ENCODE measurements at regions of chr15 and their contacts with region 1.

Region 1: GRCh38 chr15:46502668-46503067 is 867.8 kb downstream of the SQOR start:
- DNase-seq: no peak
- ATAC-seq: no peak
- H3K4me3 ChIP-seq: no peak overlapping the region
- H3K4me3 Mint-ChIP-seq: no peak overlapping the region
- H3K27ac ChIP-seq: no peak overlapping the region
- H3K27ac Mint-ChIP-seq: no peak overlapping the region
- H3K4me1 ChIP-seq: no peaks in the 10 kb centered on the region
- H3K4me1 Mint-ChIP-seq: no peaks in the 10 kb centered on the region
- H3K27me3 ChIP-seq: peaks cover 0 to 3% of the 10 kb centered on the region in 2 experiments
- H3K27me3 Mint-ChIP-seq: no peaks in the 10 kb centered on the region

Region 2: GRCh38 chr15:46471096-46471495 is 31.6 kb before region 1 on chr15:
- CTCF ChIA-PET with region 1: no interaction called
- POLR2A ChIA-PET with region 1: no interaction called
- DNase-seq: no peak
- ATAC-seq: no peak
- H3K4me3 ChIP-seq: no peak overlapping the region
- H3K4me3 Mint-ChIP-seq: no peak overlapping the region
- H3K27ac ChIP-seq: no peak overlapping the region
- H3K27ac Mint-ChIP-seq: no peak overlapping the region
- H3K4me1 ChIP-seq: no peaks in the 10 kb centered on the region
- H3K4me1 Mint-ChIP-seq: no peaks in the 10 kb centered on the region
- H3K27me3 ChIP-seq: no peaks in the 10 kb centered on the region
- H3K27me3 Mint-ChIP-seq: no peaks in the 10 kb centered on the region

Region 3: GRCh38 chr15:47944637-47945288 is 1442.1 kb after region 1 on chr15:
- CTCF ChIA-PET with region 1: no interaction called
- POLR2A ChIA-PET with region 1: interaction called in 1 of 2 experiments, 21 read pairs
- DNase-seq: no peak
- ATAC-seq: no peak
- H3K4me3 ChIP-seq: no peak overlapping the region
- H3K4me3 Mint-ChIP-seq: no peak overlapping the region
- H3K27ac ChIP-seq: no peak overlapping the region
- H3K27ac Mint-ChIP-seq: no peak overlapping the region
- H3K4me1 ChIP-seq: no peaks in the 10 kb centered on the region
- H3K4me1 Mint-ChIP-seq: no peaks in the 10 kb centered on the region
- H3K27me3 ChIP-seq: no peaks in the 10 kb centered on the region
- H3K27me3 Mint-ChIP-seq: peaks cover 0 to 2% of the 10 kb centered on the region in 2 donors